ENCODE measurements at regions of chr7 and their contacts with region 1.

Region 1: DNA sequence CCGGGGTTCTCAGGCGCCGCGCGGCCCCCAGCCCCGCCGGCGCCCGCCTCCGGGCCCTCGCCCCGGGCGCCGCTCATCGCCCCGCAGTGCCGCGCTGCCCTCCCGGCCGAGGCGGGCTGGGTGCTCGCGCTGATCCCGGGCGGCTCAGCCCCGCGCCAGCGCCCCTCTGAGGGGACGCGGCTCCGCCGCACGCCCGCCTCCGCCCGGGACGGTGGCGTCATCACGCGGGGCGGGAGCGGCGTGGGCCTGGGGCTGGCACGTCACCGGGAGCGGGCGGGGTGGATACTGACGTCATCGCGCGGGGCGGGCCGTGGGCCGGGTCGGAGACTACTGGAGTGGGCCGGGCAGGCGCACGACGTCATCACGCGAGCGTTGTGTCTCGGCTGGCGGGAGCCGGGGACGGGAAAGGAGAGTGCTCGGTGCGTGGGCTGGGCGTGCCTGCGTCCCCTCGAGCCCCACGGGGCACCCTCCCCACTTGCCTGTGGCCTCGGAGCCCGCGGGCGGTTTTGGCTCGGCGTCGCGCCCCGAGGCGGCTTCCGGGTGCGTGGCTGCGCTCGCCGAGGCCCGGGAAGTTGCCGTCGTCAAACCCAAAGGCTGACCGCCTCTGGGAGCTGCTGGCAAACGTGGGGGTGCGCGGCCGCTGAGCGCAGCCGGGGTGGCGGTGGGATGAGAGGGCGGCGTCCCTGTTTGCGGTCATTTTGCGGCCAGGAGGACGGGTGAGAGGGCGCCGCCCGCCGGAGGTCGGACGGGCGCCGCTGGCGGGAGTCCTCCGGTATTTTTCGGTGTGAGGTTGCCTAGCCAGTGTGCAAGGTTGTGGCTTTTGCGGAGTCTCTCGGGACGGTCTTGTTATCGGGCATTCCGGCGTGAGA is at the start of gene ESYT2:
- DNase-seq: peak; percentile 100
- total RNA-seq, gene ESYT2: 45.6 TPM

Region 2: DNA sequence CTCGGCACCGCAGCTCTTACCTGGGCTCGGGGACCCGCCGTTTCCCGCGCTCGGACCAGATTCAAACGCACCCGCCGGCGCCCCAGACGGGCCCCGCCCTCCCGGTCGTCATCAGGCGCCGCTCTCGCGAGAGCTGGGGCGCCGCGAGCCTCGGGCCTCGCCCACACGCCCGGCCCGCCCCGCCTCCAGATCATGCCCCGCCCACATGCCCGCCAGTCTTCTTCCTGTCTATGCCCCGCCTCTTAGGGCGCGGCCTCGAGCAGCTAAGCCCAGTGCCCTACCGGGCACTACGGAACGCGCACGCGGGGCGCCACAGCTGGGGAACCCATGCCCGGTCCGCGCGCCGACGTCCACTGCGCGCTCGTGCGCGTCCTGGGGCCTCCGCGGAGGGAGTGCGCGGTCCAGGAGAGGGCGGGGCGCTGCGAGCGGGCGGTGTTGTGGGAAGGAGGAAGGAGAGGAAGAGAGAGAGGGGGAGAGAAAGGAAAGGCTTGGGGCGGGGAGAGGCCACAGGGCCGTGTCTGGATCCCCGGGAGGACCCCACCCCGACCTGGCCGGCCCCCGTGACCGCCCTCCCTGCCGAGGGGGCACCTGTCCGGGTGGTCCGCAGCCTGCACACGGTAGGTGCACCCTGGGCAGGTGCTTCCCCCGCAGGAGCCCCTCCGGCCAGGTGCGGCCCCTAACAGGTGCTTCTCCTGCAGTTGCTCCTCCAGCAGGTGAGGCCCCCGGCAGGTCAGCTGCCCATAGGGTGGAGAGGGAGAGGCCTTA is 124.7 kb before region 1 on chr7 and contains the start of gene NCAPG2:
- intact Hi-C with region 1: loop called (anchors 2 kb)
- DNase-seq: peak; percentile 99
- total RNA-seq, gene NCAPG2: 3.6 TPM

Region 3: GRCh38 chr7:158856883-158857668 is 27.5 kb after region 1 on chr7:
- intact Hi-C with region 1: loop called (anchors 2 kb)
- DNase-seq: no peak

Region 4: DNA sequence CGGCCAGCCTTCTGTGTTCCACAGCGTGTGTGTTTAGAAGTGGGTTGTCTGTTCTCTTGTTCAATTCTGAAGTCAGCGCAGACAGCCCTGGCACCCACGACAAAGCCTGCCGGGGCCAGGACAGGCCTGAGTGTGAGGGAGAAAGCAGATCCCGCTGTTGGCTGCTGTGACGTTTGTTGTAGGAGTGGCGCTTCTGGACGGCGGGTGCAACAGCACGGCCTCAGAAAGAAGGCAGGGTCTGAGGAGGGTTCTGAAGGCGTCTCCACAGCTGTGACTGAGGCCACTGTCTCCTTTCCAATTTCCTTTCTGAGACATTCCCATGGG is 238.9 kb after region 1 on chr7:
- intact Hi-C with region 1: no loop called
- DNase-seq: peak; percentile 79